Lower leg skin (tissue), 4 donors: ENCODE measurements at regions of chr6 and their contacts with region 1.

Region 1: GRCh38 chr6:139219271-139219729 is 72.5 kb downstream of the TXLNB start:
- DNase-seq: peak; percentile 85 to 96
- H3K4me3 ChIP-seq: no peak overlapping the region
- CTCF ChIP-seq: peak in 1 of 3 donors; percentile 84
- POLR2A ChIP-seq: no peak

Region 2: DNA sequence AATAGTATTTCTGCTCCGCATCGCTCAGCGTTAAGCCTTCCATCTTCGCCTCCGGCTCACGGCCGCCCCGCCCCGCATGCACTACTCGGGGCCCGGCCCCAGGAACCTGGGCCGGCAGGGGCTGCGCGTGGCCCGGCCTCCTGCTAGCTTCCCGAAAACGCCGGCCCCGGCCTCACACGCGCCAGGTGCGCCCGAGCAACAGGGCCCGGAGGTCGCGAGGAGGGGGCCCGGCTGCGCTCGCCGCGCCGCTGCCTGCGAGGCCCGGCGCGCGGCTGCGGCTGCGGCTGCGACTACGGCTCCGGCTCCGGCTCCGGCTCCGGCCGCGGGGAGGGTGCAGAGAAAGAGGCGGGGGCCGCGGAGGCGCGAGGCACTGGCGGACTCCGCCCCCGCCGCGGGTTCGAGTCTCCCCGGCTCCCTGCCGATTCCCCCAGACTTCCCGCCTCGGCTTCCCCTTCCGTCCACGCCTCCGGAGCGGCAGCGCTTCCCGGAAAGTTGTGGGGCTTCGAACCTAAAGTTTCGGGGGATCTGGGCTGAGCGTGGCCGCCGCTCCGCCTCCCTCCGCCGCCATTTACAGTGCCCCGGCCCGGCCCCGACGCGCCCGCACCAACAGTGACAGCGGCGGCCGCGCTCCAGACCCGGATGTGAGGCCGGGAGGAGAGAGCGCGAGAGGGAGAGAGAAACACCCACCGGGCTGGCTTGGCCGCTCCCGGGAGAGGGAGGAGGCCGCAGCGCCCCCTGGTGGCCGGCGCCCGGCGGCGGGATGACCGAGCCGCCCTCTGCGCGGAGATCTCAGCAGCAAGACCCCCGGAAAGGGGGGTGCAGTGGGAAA is 231.4 kb before region 1 on chr6 and contains the start of gene REPS1:
- intact Hi-C with region 1: no loop called
- DNase-seq: peak; percentile 88 to 98
- H3K4me3 ChIP-seq: peak within 1 kb of the TSS; percentile 86
- CTCF ChIP-seq: peak in 2 of 3 donors; percentile 56 to 93
- POLR2A ChIP-seq: no peak
- total RNA-seq, gene REPS1: 47.1 to 111 (median 67.6) TPM

Region 3: DNA sequence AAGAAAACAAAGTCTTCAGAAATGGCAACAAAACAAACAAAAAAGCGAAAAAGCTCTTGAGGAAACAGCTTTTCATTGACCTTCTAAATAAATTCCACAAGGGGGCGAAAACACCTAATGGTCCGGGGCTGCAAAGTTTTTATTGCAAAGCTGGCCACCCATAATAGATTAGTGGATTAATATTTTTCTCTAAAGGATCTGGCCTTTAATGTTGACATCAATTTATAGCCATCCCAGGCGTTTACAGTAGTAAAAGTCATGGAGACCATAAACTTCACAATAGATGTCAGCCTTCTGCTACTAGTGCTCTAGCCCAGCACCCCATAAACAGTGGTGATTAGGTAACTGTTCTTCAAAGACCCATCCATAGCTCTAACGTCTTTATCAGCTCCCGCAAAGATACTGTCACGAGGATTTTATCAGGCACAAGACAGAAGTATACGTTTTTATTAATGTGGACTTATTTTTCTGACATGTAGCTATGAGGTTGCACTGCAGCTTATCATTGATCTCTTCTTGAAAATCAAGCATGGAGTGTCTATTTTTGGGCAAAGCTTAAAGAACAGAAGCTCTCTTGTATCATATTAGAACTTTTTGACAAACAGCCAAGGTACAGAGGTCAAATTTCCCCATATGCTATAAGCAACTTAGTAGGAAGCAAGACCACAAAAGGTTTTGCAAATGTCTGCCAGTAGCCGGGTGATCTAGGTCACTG is 150.4 kb after region 1 on chr6:
- intact Hi-C with region 1: loop called (anchors 5 kb)
- DNase-seq: no peak
- H3K4me3 ChIP-seq: no peak overlapping the region
- CTCF ChIP-seq: peak in 1 of 3 donors; percentile 19
- POLR2A ChIP-seq: no peak

Region 4: GRCh38 chr6:139923964-139924475 is 704.7 kb after region 1 on chr6:
- intact Hi-C with region 1: loop called (anchors 2 kb)
- DNase-seq: no peak
- H3K4me3 ChIP-seq: no peak overlapping the region
- CTCF ChIP-seq: no peak
- POLR2A ChIP-seq: no peak